ENCODE measurements at regions of chr14 and their contacts with region 1.

Region 1: GRCh38 chr14:30214461-30215090 is 286.9 kb upstream of the PRKD1 start:
- DNase-seq: no peak
- H3K4me3 Mint-ChIP-seq: no peak overlapping the region
- H3K27ac Mint-ChIP-seq: no peak overlapping the region
- H3K4me1 Mint-ChIP-seq: no peaks in the 10 kb centered on the region
- H3K27me3 Mint-ChIP-seq: no peaks in the 10 kb centered on the region

Region 2: DNA sequence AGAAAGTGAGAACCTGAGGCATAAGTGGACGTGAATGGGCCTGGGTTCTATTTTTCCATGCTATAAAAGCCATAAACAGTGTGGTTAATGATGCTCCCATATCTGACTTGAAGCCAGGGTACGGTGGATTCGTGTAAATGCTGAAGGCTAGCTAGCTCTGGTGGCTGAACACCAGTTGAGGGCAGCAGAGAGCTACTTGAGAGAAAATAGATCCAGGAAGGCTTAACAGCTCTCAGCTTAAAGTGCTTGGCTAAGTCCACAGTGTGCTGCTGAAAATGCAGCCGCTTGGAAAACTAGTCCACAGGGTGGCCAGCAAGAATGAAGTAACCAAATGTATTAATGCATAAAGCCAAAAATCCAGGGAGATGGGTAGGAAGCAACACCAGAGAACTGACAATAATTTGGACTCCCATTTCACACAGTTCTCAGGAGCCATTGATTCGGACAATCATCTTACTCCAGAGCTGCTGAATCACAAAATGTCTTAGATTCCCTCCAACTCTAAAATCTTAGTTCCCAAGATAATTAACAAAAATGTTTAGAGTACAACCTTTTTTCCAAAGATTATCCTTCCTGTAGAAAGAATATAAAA is 1463.0 kb before region 1 on chr14:
- intact Hi-C with region 1: loop called (anchors 5 kb)
- DNase-seq: peak; percentile 64
- H3K4me3 Mint-ChIP-seq: no peak overlapping the region
- H3K27ac Mint-ChIP-seq: no peak overlapping the region
- H3K4me1 Mint-ChIP-seq: no peaks in the 10 kb centered on the region
- H3K27me3 Mint-ChIP-seq: peaks cover 19% of the 10 kb centered on the region

Region 3: DNA sequence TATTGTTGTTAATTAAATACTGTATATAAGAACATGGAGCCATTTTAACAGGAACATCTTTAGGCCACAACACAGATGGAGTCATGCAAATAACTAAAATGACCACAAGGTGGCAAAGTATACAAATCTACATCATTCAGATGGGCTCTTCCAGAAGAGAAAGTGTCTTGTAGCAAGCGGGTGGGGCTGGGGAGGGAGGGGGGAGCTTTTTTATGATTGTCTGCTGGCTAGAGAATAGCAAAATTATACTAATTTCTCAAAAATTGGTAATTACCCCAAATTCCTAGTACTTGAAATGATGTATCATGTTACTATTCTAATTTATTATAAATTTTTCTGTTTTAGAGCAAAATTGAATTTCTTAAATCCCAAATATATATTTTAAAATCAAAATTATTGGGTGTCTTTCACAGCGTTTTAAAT is 665.6 kb before region 1 on chr14:
- intact Hi-C with region 1: loop called (anchors 2 kb)
- DNase-seq: no peak
- H3K4me3 Mint-ChIP-seq: no peak overlapping the region
- H3K27ac Mint-ChIP-seq: no peak overlapping the region
- H3K4me1 Mint-ChIP-seq: no peaks in the 10 kb centered on the region
- H3K27me3 Mint-ChIP-seq: no peaks in the 10 kb centered on the region

Region 4: DNA sequence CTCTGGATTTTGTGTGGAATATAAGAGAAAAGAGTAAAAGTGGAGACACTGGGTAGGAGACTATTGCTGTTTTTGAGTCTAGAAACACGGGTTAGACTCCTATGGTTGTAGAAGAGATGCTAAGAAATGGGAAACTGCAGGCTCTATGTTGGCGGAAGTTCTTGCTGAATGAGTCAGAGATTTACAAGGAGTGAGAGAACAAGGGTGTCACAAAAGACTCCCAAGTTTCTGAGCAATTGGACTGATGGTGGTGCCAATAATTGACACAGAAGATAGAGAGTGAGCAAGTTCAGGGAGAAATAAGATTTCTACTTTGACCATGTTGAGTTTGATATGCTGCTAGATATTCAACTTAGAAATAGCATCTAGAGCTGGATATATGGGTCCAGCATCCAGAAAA is 284.3 kb before region 1 on chr14:
- intact Hi-C with region 1: no loop called
- DNase-seq: no peak
- H3K4me3 Mint-ChIP-seq: no peak overlapping the region
- H3K27ac Mint-ChIP-seq: no peak overlapping the region
- H3K4me1 Mint-ChIP-seq: peaks cover 4% of the 10 kb centered on the region
- H3K27me3 Mint-ChIP-seq: peaks cover 33% of the 10 kb centered on the region

Region 5: GRCh38 chr14:30180219-30180618 is 34.4 kb before region 1 on chr14:
- intact Hi-C with region 1: no loop called
- DNase-seq: no peak
- H3K4me3 Mint-ChIP-seq: no peak overlapping the region
- H3K27ac Mint-ChIP-seq: no peak overlapping the region
- H3K4me1 Mint-ChIP-seq: no peaks in the 10 kb centered on the region
- H3K27me3 Mint-ChIP-seq: no peaks in the 10 kb centered on the region